ENCODE measurements at regions of chr13 and their contacts with region 1.

Region 1: DNA sequence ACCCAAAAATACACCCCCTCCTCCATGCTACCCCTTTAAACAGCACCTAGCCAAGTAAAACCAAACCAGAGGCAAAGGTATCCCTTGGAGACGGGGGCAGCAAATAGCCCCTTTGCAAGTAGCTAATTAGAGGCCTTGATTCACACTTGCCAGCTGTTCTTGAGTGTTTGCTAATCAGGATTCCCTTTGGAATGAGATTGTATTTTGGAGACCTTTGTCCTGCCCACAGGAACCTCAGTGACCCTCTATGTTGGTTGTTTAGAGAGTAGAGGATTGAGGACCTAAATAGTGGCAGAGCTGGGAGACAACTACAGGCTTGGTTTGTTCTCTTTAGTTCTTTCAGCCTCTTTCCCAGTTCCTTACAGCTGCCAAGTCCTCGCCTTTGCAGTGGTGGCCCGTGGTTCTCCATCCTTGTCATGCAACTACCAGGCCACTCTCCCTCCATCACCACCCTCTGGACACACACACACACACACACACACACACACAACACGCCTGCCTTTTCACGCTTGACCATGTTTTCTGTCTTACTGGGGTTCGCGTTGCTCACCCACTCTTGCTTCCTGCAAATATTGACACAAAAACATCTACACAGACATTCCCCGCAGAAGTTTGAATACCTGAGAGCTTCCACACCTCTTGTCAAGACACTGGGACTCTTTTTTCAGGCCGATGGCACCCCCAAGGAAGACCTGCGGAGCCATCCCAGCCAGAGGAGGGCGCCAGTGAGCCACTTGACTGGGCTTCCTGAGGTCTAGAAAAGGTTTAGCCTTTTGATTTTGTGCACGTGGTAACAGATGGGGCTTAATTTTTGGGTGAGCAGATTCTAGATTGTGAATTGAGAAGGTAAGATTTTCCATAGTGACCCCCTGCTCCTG is 80.0 kb upstream of the GPR183 start:
- DNase-seq: peak; percentile 33
- H3K4me3 ChIP-seq: no peak overlapping the region
- H3K27ac ChIP-seq: no peak overlapping the region
- H3K4me1 ChIP-seq: no peaks in the 10 kb centered on the region
- H3K27me3 ChIP-seq: no peaks in the 10 kb centered on the region
- CTCF ChIP-seq: peak; percentile 74 to 86
- POLR2A ChIP-seq: no peak

Region 2: GRCh38 chr13:99312493-99312883 is 74.7 kb before region 1 on chr13:
- CTCF ChIA-PET with region 1: interaction called, 3 read pairs
- POLR2A ChIA-PET with region 1: no interaction called
- dilution Hi-C with region 1: no loop called
- intact Hi-C with region 1: loop called (anchors 5 kb)
- DNase-seq: no peak
- H3K4me3 ChIP-seq: no peak overlapping the region
- H3K27ac ChIP-seq: peak overlapping the region; percentile 1
- H3K4me1 ChIP-seq: peaks cover 39% of the 10 kb centered on the region
- H3K27me3 ChIP-seq: no peaks in the 10 kb centered on the region
- CTCF ChIP-seq: no peak
- POLR2A ChIP-seq: no peak

Region 3: DNA sequence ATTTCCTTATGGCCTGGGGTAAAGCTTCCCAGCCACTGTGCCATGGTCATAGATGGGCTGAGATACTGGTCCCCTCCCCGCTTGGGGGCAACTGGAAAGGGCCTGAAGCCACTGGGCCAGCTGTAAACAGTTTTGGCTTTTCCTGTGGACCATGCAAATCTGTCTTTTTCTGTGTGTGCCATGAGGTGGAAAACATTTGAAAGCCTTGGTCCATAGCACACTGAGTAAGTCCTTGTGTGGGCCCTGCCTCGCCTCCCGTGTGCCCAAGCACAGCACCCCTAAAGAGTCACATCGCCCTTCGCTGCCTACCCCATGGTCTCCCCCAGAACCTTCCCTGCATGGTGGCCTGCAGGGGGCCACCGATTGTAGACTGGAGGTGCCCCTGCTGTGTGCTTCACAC is 27.6 kb before region 1 on chr13:
- CTCF ChIA-PET with region 1: no interaction called
- POLR2A ChIA-PET with region 1: no interaction called
- dilution Hi-C with region 1: no loop called
- intact Hi-C with region 1: no loop called
- DNase-seq: no peak
- H3K4me3 ChIP-seq: no peak overlapping the region
- H3K27ac ChIP-seq: no peak overlapping the region
- H3K4me1 ChIP-seq: peaks cover 24% of the 10 kb centered on the region
- H3K27me3 ChIP-seq: no peaks in the 10 kb centered on the region
- CTCF ChIP-seq: no peak
- POLR2A ChIP-seq: no peak

Measured in endothelial cell of umbilical vein (primary cell).